ENCODE measurements at regions of chr10 and their contacts with region 1.

Region 1: GRCh38 chr10:18104223-18104872 is 35.9 kb upstream of the CACNB2 start:
- DNase-seq: peak; percentile 48
- H3K4me3 Mint-ChIP-seq: no peak overlapping the region
- H3K27ac Mint-ChIP-seq: no peak overlapping the region
- H3K4me1 Mint-ChIP-seq: no peaks in the 10 kb centered on the region
- H3K27me3 Mint-ChIP-seq: no peaks in the 10 kb centered on the region
- CTCF ChIP-seq: peak; percentile 51

Region 2: GRCh38 chr10:16933783-16934182 is 1170.6 kb before region 1 on chr10:
- CTCF ChIA-PET with region 1: interaction called, 16 read pairs
- intact Hi-C with region 1: no loop called
- DNase-seq: no peak
- H3K4me3 Mint-ChIP-seq: no peak overlapping the region
- H3K27ac Mint-ChIP-seq: no peak overlapping the region
- H3K4me1 Mint-ChIP-seq: no peaks in the 10 kb centered on the region
- H3K27me3 Mint-ChIP-seq: no peaks in the 10 kb centered on the region
- CTCF ChIP-seq: no peak

Region 3: GRCh38 chr10:17756557-17757217 is 347.7 kb before region 1 on chr10:
- CTCF ChIA-PET with region 1: no interaction called
- intact Hi-C with region 1: no loop called
- DNase-seq: peak; percentile 9
- H3K4me3 Mint-ChIP-seq: no peak overlapping the region
- H3K27ac Mint-ChIP-seq: no peak overlapping the region
- H3K4me1 Mint-ChIP-seq: no peaks in the 10 kb centered on the region
- H3K27me3 Mint-ChIP-seq: no peaks in the 10 kb centered on the region
- CTCF ChIP-seq: no peak

Region 4: GRCh38 chr10:17847585-17848296 is 256.6 kb before region 1 on chr10:
- CTCF ChIA-PET with region 1: no interaction called
- intact Hi-C with region 1: loop called (anchors 1 kb)
- DNase-seq: no peak
- H3K4me3 Mint-ChIP-seq: no peak overlapping the region
- H3K27ac Mint-ChIP-seq: no peak overlapping the region
- H3K4me1 Mint-ChIP-seq: no peaks in the 10 kb centered on the region
- H3K27me3 Mint-ChIP-seq: peaks cover 23% of the 10 kb centered on the region
- CTCF ChIP-seq: peak; percentile 24

Region 5: DNA sequence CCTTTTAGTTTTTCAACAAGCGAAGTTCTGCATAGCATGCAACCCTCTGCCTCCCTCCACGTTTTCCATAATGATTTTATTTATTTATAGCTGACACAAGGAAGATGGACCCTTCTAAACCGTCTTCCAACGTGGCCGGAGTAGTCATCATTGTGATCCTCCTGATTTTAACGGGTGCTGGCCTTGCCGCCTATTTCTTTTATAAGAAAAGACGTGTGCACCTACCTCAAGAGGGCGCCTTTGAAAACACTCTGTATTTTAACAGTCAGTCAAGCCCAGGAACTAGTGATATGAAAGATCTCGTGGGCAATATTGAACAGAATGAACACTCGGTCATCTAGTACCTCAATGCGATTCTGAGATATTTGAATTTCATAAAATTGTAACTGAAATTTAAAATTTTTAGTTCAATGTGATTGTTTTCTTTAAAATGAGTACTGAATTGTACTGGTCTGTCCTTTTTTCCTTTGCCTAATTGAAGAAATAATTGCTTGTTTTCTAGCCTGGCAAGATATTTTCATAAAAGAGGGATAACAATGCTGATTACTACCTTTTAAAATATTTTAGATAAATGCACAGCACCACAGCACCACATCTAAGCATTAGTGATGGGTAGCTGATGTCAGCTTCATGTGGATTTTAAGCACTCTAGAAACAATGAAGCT is 194.1 kb before region 1 on chr10:
- CTCF ChIA-PET with region 1: no interaction called
- intact Hi-C with region 1: loop called (anchors 1 kb)
- DNase-seq: peak; percentile 20
- H3K4me3 Mint-ChIP-seq: no peak overlapping the region
- H3K27ac Mint-ChIP-seq: no peak overlapping the region
- H3K4me1 Mint-ChIP-seq: no peaks in the 10 kb centered on the region
- H3K27me3 Mint-ChIP-seq: no peaks in the 10 kb centered on the region
- CTCF ChIP-seq: peak; percentile 24